ENCODE measurements at regions of chr15 and their contacts with region 1.

Region 1: DNA sequence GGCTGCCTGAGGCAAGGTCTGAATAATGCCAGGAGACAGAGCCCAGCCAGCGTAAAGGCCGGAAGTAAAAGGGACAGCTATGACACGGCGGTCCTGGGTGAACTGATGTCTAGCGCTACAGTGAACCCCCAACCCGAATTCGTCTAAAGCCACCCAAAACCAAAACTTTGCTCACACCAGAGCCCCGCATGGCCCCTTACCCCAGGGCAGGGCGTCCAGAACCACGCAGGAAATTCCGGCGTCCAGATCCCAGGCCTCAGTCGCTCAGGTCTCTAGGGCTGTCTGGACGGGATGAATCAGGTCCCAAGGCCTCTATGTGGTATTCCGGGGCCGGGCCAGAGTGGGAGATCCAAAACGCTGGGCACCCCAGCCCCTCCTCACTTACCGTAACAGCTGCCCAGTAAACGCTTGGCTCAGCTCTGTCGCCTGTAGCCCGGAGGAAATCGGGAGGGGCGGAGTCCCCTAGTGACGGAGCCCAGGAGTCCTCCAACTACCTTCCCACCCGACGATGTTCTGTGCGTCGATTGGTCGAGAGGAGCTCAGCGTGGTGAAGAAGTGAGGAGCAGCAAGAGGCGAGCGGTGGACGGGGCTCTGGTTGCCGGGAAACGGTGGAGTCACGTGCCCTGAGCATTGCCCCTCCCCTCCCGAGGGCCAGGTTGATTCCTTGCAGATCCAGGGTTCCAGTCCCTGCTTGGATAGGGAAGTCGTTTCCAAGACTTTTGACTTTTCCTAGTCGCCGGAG is at the start of gene CCDC32:
- DNase-seq: peak; percentile 97 to 99 (median 98)
- ATAC-seq: peak; percentile 98 to 99 (median 98)
- H3K4me3 ChIP-seq: peak within 1 kb of the TSS; percentile 58 to 97 (median 84)
- H3K27ac ChIP-seq: peak within 1 kb of the TSS; percentile 76 to 99 (median 93)
- H3K4me1 ChIP-seq: peaks cover 0 to 46% (median 19%) of the 10 kb centered on the region in 12 donors
- H3K27me3 ChIP-seq: no peaks in the 10 kb centered on the region
- CTCF ChIP-seq: peak in 1 of 12 donors; percentile 17
- POLR2A ChIP-seq: peak in 1 of 2 donors; percentile 88
- total RNA-seq, gene CCDC32: 13.0 to 38.2 (median 23.6) TPM

Region 2: GRCh38 chr15:40454904-40455391 is 109.8 kb before region 1 on chr15:
- intact Hi-C with region 1: no loop called
- DNase-seq: no peak
- ATAC-seq: no peak
- H3K4me3 ChIP-seq: no peak overlapping the region
- H3K27ac ChIP-seq: no peak overlapping the region
- H3K4me1 ChIP-seq: peaks cover 4 to 66% (median 45%) of the 10 kb centered on the region in 12 donors
- H3K27me3 ChIP-seq: no peaks in the 10 kb centered on the region
- CTCF ChIP-seq: no peak
- POLR2A ChIP-seq: no peak

Region 3: DNA sequence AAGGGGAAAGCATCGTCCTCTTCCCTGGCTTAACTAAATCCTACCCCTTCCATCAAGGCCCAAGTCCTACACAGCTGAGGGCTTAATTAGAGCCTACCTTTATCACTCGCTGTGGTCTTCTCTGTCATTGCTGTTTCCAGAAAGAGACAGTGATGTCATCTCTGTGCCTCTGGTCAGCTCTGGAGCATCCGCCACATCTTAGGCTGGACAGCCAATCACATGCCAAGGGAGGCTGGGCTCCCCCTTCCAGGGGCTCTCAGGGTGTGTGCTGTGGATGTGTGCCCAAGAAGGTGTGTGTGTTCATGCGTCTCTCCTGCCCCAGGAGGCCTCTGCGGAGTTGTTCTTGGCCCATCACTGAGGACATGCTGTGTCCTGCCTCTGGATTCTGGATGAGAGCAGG is 51.2 kb before region 1 on chr15:
- intact Hi-C with region 1: loop called in 2 of 10 experiments (anchors 5 to 10 kb)
- DNase-seq: no peak
- ATAC-seq: no peak
- H3K4me3 ChIP-seq: no peak overlapping the region
- H3K27ac ChIP-seq: no peak overlapping the region
- H3K4me1 ChIP-seq: peaks cover 0 to 16% (median 10%) of the 10 kb centered on the region in 12 donors
- H3K27me3 ChIP-seq: peaks cover 0 to 27% (median 0%) of the 10 kb centered on the region in 9 donors
- CTCF ChIP-seq: no peak
- POLR2A ChIP-seq: no peak

Region 4: GRCh38 chr15:40754883-40755811 is 190.4 kb after region 1 on chr15 and contains the start of gene RMDN3:
- intact Hi-C with region 1: loop called in 1 of 10 experiments (anchors 2 kb)
- DNase-seq: peak; percentile 93 to 97 (median 94)
- ATAC-seq: peak; percentile 94 to 100 (median 98)
- H3K4me3 ChIP-seq: peak within 1 kb of the TSS; percentile 70 to 98 (median 86)
- H3K27ac ChIP-seq: peak within 1 kb of the TSS in 11 of 12 donors; percentile 51 to 85 (median 80)
- H3K4me1 ChIP-seq: peaks cover 0 to 24% (median 12%) of the 10 kb centered on the region in 12 donors
- H3K27me3 ChIP-seq: no peaks in the 10 kb centered on the region
- CTCF ChIP-seq: peak in 3 of 12 donors; percentile 20 to 33 (median 29)
- POLR2A ChIP-seq: peak in 1 of 2 donors; percentile 76
- total RNA-seq, gene RMDN3: 12.0 to 22.9 (median 18.5) TPM

Measured in heart left ventricle (tissue), 16 donors.